ENCODE measurements at regions of chr10 and their contacts with region 1.

Region 1: GRCh38 chr10:77478247-77478961 is 159.2 kb downstream of the KCNMA1 start:
- DNase-seq: no peak
- ATAC-seq: no peak
- H3K4me3 ChIP-seq: no peak overlapping the region
- H3K4me3 Mint-ChIP-seq: no peak overlapping the region
- H3K27ac ChIP-seq: no peak overlapping the region
- H3K27ac Mint-ChIP-seq: no peak overlapping the region
- H3K4me1 ChIP-seq: no peaks in the 10 kb centered on the region
- H3K4me1 Mint-ChIP-seq: no peaks in the 10 kb centered on the region
- H3K27me3 ChIP-seq: no peaks in the 10 kb centered on the region
- H3K27me3 Mint-ChIP-seq: peaks cover 7% of the 10 kb centered on the region
- CTCF ChIP-seq: no peak

Region 2: GRCh38 chr10:76697923-76698322 is 780.5 kb before region 1 on chr10:
- CTCF ChIA-PET with region 1: no interaction called
- POLR2A ChIA-PET with region 1: no interaction called
- intact Hi-C with region 1: loop called in 1 of 2 experiments (anchors 10 kb)
- DNase-seq: no peak
- ATAC-seq: no peak
- H3K4me3 ChIP-seq: no peak overlapping the region
- H3K4me3 Mint-ChIP-seq: no peak overlapping the region
- H3K27ac ChIP-seq: no peak overlapping the region
- H3K27ac Mint-ChIP-seq: no peak overlapping the region
- H3K4me1 ChIP-seq: no peaks in the 10 kb centered on the region
- H3K4me1 Mint-ChIP-seq: no peaks in the 10 kb centered on the region
- H3K27me3 ChIP-seq: no peaks in the 10 kb centered on the region
- H3K27me3 Mint-ChIP-seq: no peaks in the 10 kb centered on the region
- CTCF ChIP-seq: no peak

Region 3: DNA sequence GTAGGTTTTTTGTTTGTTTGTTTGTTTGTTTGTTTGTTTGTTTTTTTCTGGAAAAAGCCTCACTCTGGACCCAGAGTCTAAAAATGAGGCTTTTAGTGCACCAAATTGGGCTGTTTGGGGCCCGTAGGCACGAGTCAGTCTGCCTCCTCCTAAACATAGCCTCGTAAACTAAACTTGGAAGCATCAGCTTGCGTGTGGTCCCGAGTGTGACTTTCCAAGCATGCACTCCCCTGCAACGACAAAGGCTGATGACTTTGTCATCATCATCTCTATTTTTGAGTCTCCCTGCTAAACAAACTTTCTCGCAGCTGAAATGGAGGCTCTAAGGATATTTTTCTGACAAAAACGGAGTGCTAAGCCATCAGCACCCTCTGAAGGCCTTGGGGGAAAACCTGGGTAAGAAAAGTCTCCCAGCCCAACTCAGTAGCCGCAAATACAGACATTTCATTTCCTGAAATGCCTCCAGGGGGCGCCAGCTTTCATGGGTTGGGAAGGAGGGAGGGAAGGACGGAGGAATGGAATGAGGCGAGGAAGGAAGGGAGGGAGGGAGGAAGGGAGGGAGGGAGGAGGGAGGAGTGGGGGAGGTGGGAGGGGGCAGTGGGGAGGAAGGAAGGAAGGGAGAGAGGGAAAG is 86.7 kb before region 1 on chr10:
- CTCF ChIA-PET with region 1: no interaction called
- POLR2A ChIA-PET with region 1: no interaction called
- intact Hi-C with region 1: no loop called
- DNase-seq: peak in 2 of 9 experiments; percentile 33 to 41
- ATAC-seq: no peak
- H3K4me3 ChIP-seq: no peak overlapping the region
- H3K4me3 Mint-ChIP-seq: no peak overlapping the region
- H3K27ac ChIP-seq: no peak overlapping the region
- H3K27ac Mint-ChIP-seq: no peak overlapping the region
- H3K4me1 ChIP-seq: peaks cover 6% of the 10 kb centered on the region
- H3K4me1 Mint-ChIP-seq: peaks cover 7% of the 10 kb centered on the region
- H3K27me3 ChIP-seq: no peaks in the 10 kb centered on the region
- H3K27me3 Mint-ChIP-seq: no peaks in the 10 kb centered on the region
- CTCF ChIP-seq: no peak

Region 4: DNA sequence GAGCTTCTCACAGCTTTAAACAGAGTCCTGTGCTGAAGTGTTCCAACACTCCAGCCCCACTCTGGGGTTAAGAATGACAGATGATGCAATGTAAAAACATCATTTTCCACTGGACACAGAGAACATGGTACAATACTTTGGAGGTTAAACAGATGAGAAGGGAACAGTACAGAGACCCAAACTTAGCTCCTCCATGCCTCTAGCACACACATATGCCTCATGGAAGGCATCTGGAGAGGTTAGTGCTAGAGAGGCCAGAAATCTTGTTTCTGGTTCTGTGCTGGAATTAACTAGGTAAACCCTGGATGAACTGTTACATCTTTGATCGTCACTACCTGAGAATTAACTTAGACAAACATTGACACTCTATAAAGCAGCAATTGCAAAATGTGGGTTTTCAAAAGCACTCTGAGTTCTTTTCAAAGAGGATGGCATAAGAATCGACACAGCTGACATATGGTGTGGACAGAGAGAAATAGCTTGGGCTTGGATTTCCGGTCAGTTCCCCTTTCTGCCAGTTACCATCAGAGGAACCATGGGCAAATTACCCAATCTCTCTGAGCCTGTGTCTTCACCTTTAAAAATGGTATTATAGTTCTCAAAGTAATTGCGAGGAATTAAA is 77.3 kb after region 1 on chr10:
- CTCF ChIA-PET with region 1: no interaction called
- POLR2A ChIA-PET with region 1: no interaction called
- intact Hi-C with region 1: no loop called
- DNase-seq: no peak
- ATAC-seq: no peak
- H3K4me3 ChIP-seq: no peak overlapping the region
- H3K4me3 Mint-ChIP-seq: no peak overlapping the region
- H3K27ac ChIP-seq: no peak overlapping the region
- H3K27ac Mint-ChIP-seq: no peak overlapping the region
- H3K4me1 ChIP-seq: no peaks in the 10 kb centered on the region
- H3K4me1 Mint-ChIP-seq: no peaks in the 10 kb centered on the region
- H3K27me3 ChIP-seq: no peaks in the 10 kb centered on the region
- H3K27me3 Mint-ChIP-seq: no peaks in the 10 kb centered on the region
- CTCF ChIP-seq: no peak